ENCODE measurements at regions of chrX and their contacts with region 1.

Region 1: GRCh38 chrX:38327007-38327774 is at the start of gene RPGR:
- DNase-seq: peak; percentile 94
- ATAC-seq: peak; percentile 99
- H3K4me3 Mint-ChIP-seq: peak within 1 kb of the TSS; percentile 84
- H3K27ac Mint-ChIP-seq: peak within 1 kb of the TSS; percentile 90
- H3K4me1 Mint-ChIP-seq: peaks cover 14% of the 10 kb centered on the region
- H3K27me3 Mint-ChIP-seq: no peaks in the 10 kb centered on the region
- CTCF ChIP-seq: peak; percentile 57
- total RNA-seq, gene RPGR: 7.0 to 7.1 TPM

Region 2: DNA sequence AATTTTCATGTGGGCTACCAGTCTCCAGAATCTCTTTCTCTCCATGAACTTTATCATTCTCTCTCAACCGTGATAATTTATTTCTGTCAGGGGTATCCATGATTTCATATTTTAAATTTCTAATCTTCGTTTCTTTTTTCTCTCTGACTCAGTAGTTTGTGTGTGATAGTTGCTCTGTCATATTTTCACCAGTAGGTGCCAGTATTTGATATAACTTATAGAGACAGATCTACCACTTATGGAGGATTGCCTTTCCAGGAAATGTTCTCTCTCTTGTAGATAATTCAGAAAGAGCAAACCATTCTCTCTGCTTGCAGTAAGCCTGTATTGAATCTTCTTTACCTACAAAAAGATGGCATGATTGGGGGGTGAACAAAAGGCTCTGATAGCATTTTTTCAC is 400.5 kb before region 1 on chrX:
- CTCF ChIA-PET with region 1: no interaction called
- POLR2A ChIA-PET with region 1: no interaction called
- intact Hi-C with region 1: loop called (anchors 10 kb)
- DNase-seq: no peak
- ATAC-seq: peak; percentile 56
- H3K4me3 Mint-ChIP-seq: no peak overlapping the region
- H3K27ac Mint-ChIP-seq: no peak overlapping the region
- H3K4me1 Mint-ChIP-seq: no peaks in the 10 kb centered on the region
- H3K27me3 Mint-ChIP-seq: peaks cover 9% of the 10 kb centered on the region
- CTCF ChIP-seq: peak; percentile 14

Region 3: GRCh38 chrX:38220024-38220414 is 107.2 kb before region 1 on chrX:
- CTCF ChIA-PET with region 1: interaction called, 10 read pairs
- POLR2A ChIA-PET with region 1: no interaction called
- intact Hi-C with region 1: no loop called
- DNase-seq: peak; percentile 21
- ATAC-seq: peak; percentile 34
- H3K4me3 Mint-ChIP-seq: no peak overlapping the region
- H3K27ac Mint-ChIP-seq: no peak overlapping the region
- H3K4me1 Mint-ChIP-seq: peaks cover 3% of the 10 kb centered on the region
- H3K27me3 Mint-ChIP-seq: peaks cover 34% of the 10 kb centered on the region
- CTCF ChIP-seq: no peak

Measured in activated CD8-positive, alpha-beta T cell treated with anti-CD3 and anti-CD28 coated beads for 36 hours (primary cell).